Heart left ventricle (tissue), 16 donors: ENCODE measurements at regions of chr4 and their contacts with region 1.

Region 1: GRCh38 chr4:173440888-173441287 is 42.0 kb upstream of the SCRG1 start:
- DNase-seq: no peak
- ATAC-seq: no peak
- H3K4me3 ChIP-seq: no peak overlapping the region
- H3K27ac ChIP-seq: no peak overlapping the region
- H3K4me1 ChIP-seq: peaks cover 0 to 2% (median 0%) of the 10 kb centered on the region in 12 donors
- H3K27me3 ChIP-seq: no peaks in the 10 kb centered on the region
- CTCF ChIP-seq: no peak
- POLR2A ChIP-seq: no peak

Region 2: GRCh38 chr4:173478201-173478912 is 37.5 kb after region 1 on chr4:
- intact Hi-C with region 1: loop called in 1 of 10 experiments (anchors 5 kb)
- DNase-seq: no peak
- ATAC-seq: peak in 2 of 4 donors; percentile 48 to 69
- H3K4me3 ChIP-seq: no peak overlapping the region
- H3K27ac ChIP-seq: peak overlapping the region in 6 of 12 donors; percentile 7 to 61 (median 35)
- H3K4me1 ChIP-seq: no peaks in the 10 kb centered on the region
- H3K27me3 ChIP-seq: no peaks in the 10 kb centered on the region
- CTCF ChIP-seq: no peak
- POLR2A ChIP-seq: no peak